ENCODE measurements at regions of chr5 and their contacts with region 1.

Region 1: GRCh38 chr5:1698589-1699316 is 100.9 kb downstream of the MRPL36 start:
- DNase-seq: no peak
- H3K4me3 Mint-ChIP-seq: no peak overlapping the region
- H3K27ac Mint-ChIP-seq: no peak overlapping the region
- H3K4me1 Mint-ChIP-seq: peaks cover 18% of the 10 kb centered on the region
- H3K27me3 Mint-ChIP-seq: peaks cover 4% of the 10 kb centered on the region

Region 2: DNA sequence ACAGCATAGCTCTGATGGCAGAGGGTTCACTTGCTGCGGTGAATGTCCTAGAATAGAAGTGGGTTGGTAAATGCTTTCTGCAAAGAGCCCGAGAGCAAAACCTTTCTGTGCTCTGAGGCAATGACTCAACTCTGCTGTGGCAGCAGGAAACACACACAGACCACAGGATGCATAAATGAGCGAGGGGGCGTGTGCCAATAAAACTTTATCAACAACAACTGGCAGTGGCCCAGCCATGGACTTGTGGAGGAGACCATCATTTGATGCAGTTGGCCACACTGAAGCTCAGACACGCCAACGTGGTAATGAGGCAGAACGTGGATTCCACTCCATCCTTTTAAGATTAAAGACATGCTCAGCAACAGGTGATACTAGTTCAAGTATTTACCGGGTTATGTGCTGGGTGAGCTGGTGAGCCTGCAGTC is 94.1 kb after region 1 on chr5:
- intact Hi-C with region 1: loop called (anchors 1 kb)
- DNase-seq: peak; percentile 78
- H3K4me3 Mint-ChIP-seq: peak overlapping the region; percentile 80
- H3K27ac Mint-ChIP-seq: peak overlapping the region; percentile 96
- H3K4me1 Mint-ChIP-seq: peaks cover 80% of the 10 kb centered on the region
- H3K27me3 Mint-ChIP-seq: peaks cover 1% of the 10 kb centered on the region